GM13976 (cell line): ENCODE measurements at regions of chr3 and their contacts with region 1.

Region 1: DNA sequence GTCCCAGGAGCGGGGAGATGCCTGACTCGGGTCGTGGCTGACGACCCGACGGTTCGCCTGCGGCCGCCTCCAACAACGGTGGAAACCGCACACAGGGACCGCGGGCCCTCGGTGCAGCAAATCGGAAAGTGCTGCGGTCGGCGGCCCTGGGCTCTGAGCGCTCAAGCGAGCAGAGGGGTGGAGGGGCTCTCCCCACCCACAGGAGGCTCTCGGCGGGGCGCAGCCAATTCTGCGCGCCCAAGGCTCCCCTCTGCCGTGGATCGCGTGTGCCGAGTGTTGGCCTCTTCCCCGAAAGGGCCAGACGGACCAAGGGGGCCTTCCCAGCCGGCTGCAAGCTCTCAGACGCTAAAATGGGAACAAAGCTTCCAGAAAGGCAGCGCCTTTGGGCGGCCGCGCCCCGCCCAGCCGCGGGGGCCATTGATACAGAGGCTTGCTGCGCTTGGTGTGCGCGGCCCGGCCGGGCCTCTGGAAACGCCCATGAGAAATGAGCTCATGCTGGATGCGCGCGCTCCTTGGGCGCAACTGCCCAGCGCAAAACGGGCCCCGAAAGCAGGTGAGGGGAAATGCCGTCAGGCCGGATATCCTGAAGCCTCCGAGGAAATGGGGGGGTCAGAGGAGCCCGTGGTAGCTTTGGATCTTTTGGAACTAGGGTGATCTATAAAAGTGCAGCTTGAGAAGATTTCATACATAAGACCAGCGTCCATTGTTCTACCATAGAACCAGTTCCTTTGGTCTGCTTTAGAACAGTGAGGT is 1.2 kb upstream of the GSK3B start:
- DNase-seq: peak; percentile 77
- CTCF ChIP-seq: no peak

Region 2: GRCh38 chr3:119579366-119580165 is 515.8 kb before region 1 on chr3 and contains the start of gene ADPRH:
- in situ Hi-C with region 1: loop called (anchors 25 kb)
- DNase-seq: peak; percentile 87
- CTCF ChIP-seq: no peak

Region 3: DNA sequence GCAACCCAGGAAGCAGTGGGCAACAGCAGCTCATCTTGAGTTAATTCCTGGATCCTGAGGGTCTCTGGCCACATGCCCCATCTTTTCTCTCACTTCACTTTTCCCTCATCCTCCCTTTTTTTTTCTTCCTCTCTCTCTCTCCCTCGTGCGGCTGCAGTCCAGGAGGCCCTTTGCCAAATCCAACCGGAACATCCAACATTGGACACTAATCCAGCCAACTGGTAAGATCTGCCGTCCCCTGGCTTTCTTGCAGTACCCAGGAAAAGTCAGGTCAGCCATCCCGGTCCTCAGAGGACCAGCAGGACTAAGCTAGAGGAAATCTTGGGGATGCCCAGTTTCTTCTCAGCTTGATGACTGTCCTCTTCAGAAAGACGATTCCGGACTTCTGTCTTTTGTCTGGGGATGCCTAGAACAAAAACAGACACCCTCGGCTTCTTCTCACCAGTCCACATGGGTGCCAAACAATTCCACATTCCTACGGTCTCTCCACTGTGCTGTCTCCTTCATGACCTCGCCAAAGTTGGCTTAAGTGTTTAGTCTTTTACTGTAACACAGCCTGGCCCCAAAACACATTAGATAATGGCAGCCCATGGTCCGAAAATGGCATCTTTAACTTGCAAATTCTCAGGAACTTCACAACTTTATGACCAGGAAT is 116.7 kb before region 1 on chr3:
- in situ Hi-C with region 1: no loop called
- DNase-seq: no peak
- CTCF ChIP-seq: no peak